ENCODE measurements at regions of chr11 and their contacts with region 1.

Region 1: GRCh38 chr11:44095506-44096394 is at the start of gene EXT2:
- DNase-seq: peak; percentile 88
- ATAC-seq: peak; percentile 97
- H3K4me3 Mint-ChIP-seq: peak within 1 kb of the TSS; percentile 83
- H3K27ac Mint-ChIP-seq: no peak within 1 kb of the TSS
- H3K4me1 Mint-ChIP-seq: peaks cover 26% of the 10 kb centered on the region
- H3K27me3 Mint-ChIP-seq: peaks cover 9% of the 10 kb centered on the region
- total RNA-seq, gene EXT2: 18.4 to 22.5 TPM

Region 2: DNA sequence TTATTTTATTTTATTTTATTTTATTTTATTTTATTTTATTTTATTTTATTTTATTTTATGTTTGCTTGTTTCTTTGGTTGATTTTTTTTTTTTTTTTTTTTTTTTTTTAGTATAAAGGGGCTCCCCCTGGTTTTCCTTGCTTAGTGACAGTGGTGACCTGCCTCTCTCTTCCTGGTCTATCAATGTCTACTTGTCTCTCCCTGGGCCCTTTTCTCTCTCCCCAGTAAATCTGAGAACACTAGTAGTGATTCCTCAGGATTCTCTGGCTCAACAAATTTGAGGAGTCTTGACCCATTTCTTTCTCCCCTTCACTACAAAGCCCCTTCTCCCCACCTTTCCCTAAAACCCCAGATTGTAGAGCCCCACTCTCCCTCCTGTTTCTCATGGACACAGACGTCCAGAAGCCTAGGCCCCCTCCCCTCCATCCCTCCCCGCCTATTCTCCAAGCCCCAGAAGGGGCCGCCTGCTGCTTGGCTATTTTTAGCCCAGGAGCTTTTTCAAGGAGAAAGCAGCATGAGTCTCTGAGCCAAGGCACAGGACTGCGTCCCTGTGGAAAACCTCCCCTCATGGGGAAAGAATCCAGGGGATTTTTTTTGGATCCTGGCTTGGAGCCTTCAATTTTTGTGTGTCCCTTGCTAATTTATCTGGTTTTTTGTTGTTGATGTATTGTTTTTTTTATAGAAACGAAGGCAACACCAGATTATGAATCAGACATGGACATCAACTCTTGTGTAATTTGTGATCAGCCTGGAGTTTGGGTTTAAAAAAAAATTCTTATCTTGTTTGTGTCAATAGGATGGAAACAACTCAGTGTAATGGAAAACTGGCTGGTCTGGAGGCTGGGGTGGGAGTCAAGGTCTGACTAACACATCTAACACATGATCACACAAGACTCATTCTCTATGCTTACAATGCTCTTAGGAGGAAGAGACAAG is 65.5 kb before region 1 on chr11:
- CTCF ChIA-PET with region 1: no interaction called
- POLR2A ChIA-PET with region 1: no interaction called
- DNase-seq: no peak
- ATAC-seq: no peak
- H3K4me3 Mint-ChIP-seq: no peak overlapping the region
- H3K27ac Mint-ChIP-seq: no peak overlapping the region
- H3K4me1 Mint-ChIP-seq: no peaks in the 10 kb centered on the region
- H3K27me3 Mint-ChIP-seq: peaks cover 19% of the 10 kb centered on the region

Region 3: GRCh38 chr11:44057340-44057739 is 38.4 kb before region 1 on chr11:
- CTCF ChIA-PET with region 1: interaction called, 12 read pairs
- POLR2A ChIA-PET with region 1: no interaction called
- DNase-seq: no peak
- ATAC-seq: no peak
- H3K4me3 Mint-ChIP-seq: no peak overlapping the region
- H3K27ac Mint-ChIP-seq: no peak overlapping the region
- H3K4me1 Mint-ChIP-seq: no peaks in the 10 kb centered on the region
- H3K27me3 Mint-ChIP-seq: peaks cover 3% of the 10 kb centered on the region

Region 4: GRCh38 chr11:44065841-44066731 is 29.7 kb before region 1 on chr11 and contains the start of gene ACCS:
- CTCF ChIA-PET with region 1: interaction called, 10 read pairs
- POLR2A ChIA-PET with region 1: interaction called, 3 read pairs
- DNase-seq: peak; percentile 93
- ATAC-seq: peak; percentile 97
- H3K4me3 Mint-ChIP-seq: peak within 1 kb of the TSS; percentile 82
- H3K27ac Mint-ChIP-seq: peak within 1 kb of the TSS; percentile 87
- H3K4me1 Mint-ChIP-seq: peaks cover 26% of the 10 kb centered on the region
- H3K27me3 Mint-ChIP-seq: peaks cover 6% of the 10 kb centered on the region
- total RNA-seq, gene ACCS: 8.7 to 9.0 TPM

Region 5: GRCh38 chr11:44071157-44071556 is 24.6 kb before region 1 on chr11:
- CTCF ChIA-PET with region 1: interaction called, 16 read pairs
- POLR2A ChIA-PET with region 1: no interaction called
- DNase-seq: no peak
- ATAC-seq: no peak
- H3K4me3 Mint-ChIP-seq: no peak overlapping the region
- H3K27ac Mint-ChIP-seq: no peak overlapping the region
- H3K4me1 Mint-ChIP-seq: peaks cover 21% of the 10 kb centered on the region
- H3K27me3 Mint-ChIP-seq: no peaks in the 10 kb centered on the region

Region 6: GRCh38 chr11:44083906-44084305 is 11.8 kb before region 1 on chr11:
- CTCF ChIA-PET with region 1: interaction called, 34 read pairs
- POLR2A ChIA-PET with region 1: no interaction called
- DNase-seq: no peak
- ATAC-seq: no peak
- H3K4me3 Mint-ChIP-seq: no peak overlapping the region
- H3K27ac Mint-ChIP-seq: no peak overlapping the region
- H3K4me1 Mint-ChIP-seq: peaks cover 7% of the 10 kb centered on the region
- H3K27me3 Mint-ChIP-seq: no peaks in the 10 kb centered on the region

Region 7: GRCh38 chr11:44120169-44120568 is 24.4 kb after region 1 on chr11:
- CTCF ChIA-PET with region 1: interaction called, 16 read pairs
- POLR2A ChIA-PET with region 1: no interaction called
- DNase-seq: no peak
- ATAC-seq: no peak
- H3K4me3 Mint-ChIP-seq: no peak overlapping the region
- H3K27ac Mint-ChIP-seq: no peak overlapping the region
- H3K4me1 Mint-ChIP-seq: no peaks in the 10 kb centered on the region
- H3K27me3 Mint-ChIP-seq: no peaks in the 10 kb centered on the region

Region 8: GRCh38 chr11:44133335-44133946 is 37.7 kb after region 1 on chr11:
- CTCF ChIA-PET with region 1: interaction called, 16 read pairs
- POLR2A ChIA-PET with region 1: no interaction called
- DNase-seq: no peak
- ATAC-seq: no peak
- H3K4me3 Mint-ChIP-seq: no peak overlapping the region
- H3K27ac Mint-ChIP-seq: no peak overlapping the region
- H3K4me1 Mint-ChIP-seq: no peaks in the 10 kb centered on the region
- H3K27me3 Mint-ChIP-seq: no peaks in the 10 kb centered on the region

Region 9: DNA sequence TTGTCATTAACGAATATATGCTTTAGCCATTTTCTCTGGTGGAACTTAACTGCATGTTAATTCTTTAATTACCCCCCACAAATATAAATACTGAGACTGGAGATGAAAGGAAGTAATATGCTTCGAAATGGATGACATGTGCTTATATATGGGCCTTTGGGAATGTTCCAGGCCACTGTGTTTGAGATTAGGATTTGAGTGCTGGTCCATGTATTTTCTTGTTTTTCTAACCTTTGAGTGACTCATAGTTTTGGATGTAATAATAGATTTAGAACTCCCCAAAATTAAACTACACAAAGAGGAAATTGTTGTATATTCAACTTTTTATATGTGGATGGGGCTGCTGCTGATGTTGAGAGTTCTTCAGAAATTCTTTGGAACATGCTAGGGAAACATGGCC is 53.9 kb after region 1 on chr11:
- CTCF ChIA-PET with region 1: no interaction called
- POLR2A ChIA-PET with region 1: no interaction called
- DNase-seq: no peak
- ATAC-seq: no peak
- H3K4me3 Mint-ChIP-seq: no peak overlapping the region
- H3K27ac Mint-ChIP-seq: no peak overlapping the region
- H3K4me1 Mint-ChIP-seq: no peaks in the 10 kb centered on the region
- H3K27me3 Mint-ChIP-seq: no peaks in the 10 kb centered on the region

Region 10: DNA sequence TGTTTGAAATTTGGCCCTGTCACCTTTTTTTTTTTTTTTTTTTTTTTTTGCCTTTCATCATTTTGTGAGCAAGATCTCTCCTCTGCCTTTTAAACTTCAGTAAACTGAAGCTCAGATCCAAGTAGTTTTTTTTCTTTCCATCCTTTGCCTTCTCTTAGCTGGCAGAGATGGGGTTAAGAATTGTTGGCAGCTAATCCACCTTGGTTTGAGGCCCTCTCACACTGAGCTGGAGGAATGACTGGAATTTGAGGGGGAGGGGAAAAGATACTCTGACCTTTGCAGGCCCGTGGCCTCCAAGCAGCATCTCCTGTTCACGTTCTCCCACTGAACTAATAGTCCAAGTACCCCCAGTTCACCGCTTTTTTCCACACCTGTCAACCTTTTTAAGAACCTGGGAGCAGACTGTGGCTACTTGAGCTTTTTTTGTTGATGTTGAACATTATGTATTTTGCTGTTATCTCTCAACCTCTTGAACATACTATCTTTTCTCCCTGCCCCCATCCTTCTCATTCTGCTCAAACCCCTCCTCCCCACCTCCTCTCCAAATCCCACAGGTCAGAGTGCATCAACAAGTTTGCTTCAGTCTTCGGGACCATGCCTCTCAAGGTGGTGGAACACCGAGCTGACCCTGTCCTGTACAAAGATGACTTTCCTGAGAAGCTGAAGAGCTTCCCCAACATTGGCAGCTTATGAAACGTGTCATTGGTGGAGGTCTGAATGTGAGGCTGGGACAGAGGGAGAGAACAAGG is 148.0 kb after region 1 on chr11:
- CTCF ChIA-PET with region 1: no interaction called
- POLR2A ChIA-PET with region 1: no interaction called
- DNase-seq: no peak
- ATAC-seq: no peak
- H3K4me3 Mint-ChIP-seq: no peak overlapping the region
- H3K27ac Mint-ChIP-seq: no peak overlapping the region
- H3K4me1 Mint-ChIP-seq: no peaks in the 10 kb centered on the region
- H3K27me3 Mint-ChIP-seq: no peaks in the 10 kb centered on the region

Measured in activated CD8-positive, alpha-beta T cell treated with anti-CD3 and anti-CD28 coated beads, Interleukin-2, amount 10 ng/mL, durations not matched to agents 7 days and 5 days (primary cell).